ENCODE measurements at regions of chr20 and their contacts with region 1.

Region 1: GRCh38 chr20:25859649-25860530 is 163.2 kb upstream of the ZNF337 start:
- DNase-seq: peak; percentile 87
- ATAC-seq: no peak
- H3K4me3 Mint-ChIP-seq: no peak overlapping the region
- H3K27ac Mint-ChIP-seq: no peak overlapping the region
- H3K4me1 Mint-ChIP-seq: peaks cover 43% of the 10 kb centered on the region
- H3K27me3 Mint-ChIP-seq: peaks cover 71% of the 10 kb centered on the region

Region 2: DNA sequence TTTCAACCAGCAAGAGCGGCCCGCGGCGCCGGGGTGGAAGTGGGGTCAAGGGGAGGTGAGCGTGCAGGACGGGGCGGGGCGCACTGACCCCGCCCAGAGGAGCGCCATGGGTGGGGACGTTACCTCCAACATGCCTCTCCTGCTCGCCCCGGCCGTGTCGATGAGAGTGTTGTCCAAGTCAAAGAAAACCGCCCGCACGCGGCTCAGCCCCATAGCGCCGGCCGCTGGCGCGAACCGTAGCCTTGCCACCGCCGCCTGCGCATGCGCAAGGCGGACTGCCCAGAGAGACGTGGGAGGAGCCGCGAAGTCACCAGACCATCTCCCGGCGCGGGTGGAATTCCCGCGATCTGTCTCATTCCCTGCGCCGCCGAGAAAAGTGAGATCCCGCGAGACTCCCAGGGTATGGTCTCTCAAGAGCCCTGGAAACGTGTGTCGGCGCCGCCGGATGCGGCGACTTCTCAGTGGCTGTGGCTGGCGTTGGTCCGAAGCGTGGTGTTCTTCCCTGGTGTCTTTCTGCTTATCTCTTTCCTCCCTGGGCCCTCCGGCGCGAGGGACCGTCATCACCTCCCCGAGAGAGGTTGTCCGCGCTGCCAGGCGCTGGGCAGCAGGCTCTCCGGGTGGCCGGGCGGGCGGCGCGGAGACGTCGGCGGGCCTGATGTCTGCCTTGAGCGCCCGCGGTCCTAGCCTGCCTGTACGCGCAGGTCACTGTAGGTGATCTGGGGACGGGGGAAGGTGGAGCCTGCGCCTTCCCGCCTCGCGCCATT is 236.0 kb before region 1 on chr20 and contains the start of gene NANP:
- CTCF ChIA-PET with region 1: no interaction called
- POLR2A ChIA-PET with region 1: no interaction called
- intact Hi-C with region 1: loop called in 1 of 2 experiments (anchors 2 kb)
- DNase-seq: peak; percentile 95
- ATAC-seq: peak; percentile 87
- H3K4me3 Mint-ChIP-seq: peak within 1 kb of the TSS; percentile 80
- H3K27ac Mint-ChIP-seq: peak within 1 kb of the TSS; percentile 95
- H3K4me1 Mint-ChIP-seq: peaks cover 21% of the 10 kb centered on the region
- H3K27me3 Mint-ChIP-seq: no peaks in the 10 kb centered on the region
- total RNA-seq, gene NANP: 6.1 to 8.3 TPM

Region 3: GRCh38 chr20:25848222-25848621 is 11.7 kb before region 1 on chr20:
- CTCF ChIA-PET with region 1: no interaction called
- POLR2A ChIA-PET with region 1: no interaction called
- intact Hi-C with region 1: no loop called
- DNase-seq: no peak
- ATAC-seq: no peak
- H3K4me3 Mint-ChIP-seq: no peak overlapping the region
- H3K27ac Mint-ChIP-seq: no peak overlapping the region
- H3K4me1 Mint-ChIP-seq: peaks cover 4% of the 10 kb centered on the region
- H3K27me3 Mint-ChIP-seq: peaks cover 4% of the 10 kb centered on the region

Measured in activated CD4-positive, alpha-beta T cell treated with anti-CD3 and anti-CD28 coated beads for 36 hours (primary cell).